ENCODE measurements at regions of chr2 and their contacts with region 1.

Region 1: DNA sequence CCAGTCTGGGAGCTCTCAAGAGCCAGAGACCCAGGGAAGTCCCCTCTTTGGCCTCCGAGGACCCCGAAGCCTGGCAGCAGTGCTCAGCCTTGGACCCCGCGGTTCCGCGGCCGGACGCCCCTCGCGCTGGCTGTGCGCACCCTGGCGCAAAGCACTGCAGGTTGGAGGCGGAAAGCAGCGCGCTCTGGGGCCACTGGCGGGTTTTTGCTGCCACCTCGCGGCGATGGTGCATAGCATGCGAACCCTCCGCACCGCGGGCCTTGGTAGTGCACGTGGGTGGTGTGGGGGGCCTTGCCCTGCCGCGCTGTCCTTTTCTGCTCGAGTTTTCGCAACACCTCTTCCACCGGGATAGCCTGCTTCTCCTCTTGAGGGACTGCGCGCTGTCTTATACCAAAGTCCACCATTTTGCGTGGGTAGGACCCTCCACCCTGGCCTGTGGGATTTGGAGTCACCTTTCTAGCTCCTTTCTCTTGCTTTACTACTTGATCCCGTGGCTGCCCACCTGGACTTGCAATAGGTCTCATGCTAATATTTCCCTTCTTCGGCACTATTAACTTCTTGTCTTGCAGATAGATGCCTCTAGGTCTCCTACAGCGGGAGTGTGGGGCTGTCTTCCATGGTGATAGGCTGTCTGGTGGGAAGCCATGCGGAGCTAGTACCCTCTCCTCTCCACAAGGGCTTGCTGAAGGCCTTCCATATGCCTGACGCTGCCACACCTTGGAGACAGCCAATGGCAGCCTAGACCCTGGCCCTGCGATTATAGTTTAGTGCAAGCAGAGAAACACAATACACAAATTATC is 14.3 kb downstream of the SIX3 start:
- DNase-seq: peak; percentile 57 to 87 (median 71)
- H3K4me3 ChIP-seq: peak overlapping the region; percentile 18 to 74 (median 49)
- H3K27ac ChIP-seq: no peak overlapping the region
- H3K27me3 ChIP-seq: peaks cover 0 to 85% (median 54%) of the 10 kb centered on the region in 45 donors
- CTCF ChIP-seq: peak in 55 of 56 donors; percentile 68 to 98 (median 92)

Region 2: DNA sequence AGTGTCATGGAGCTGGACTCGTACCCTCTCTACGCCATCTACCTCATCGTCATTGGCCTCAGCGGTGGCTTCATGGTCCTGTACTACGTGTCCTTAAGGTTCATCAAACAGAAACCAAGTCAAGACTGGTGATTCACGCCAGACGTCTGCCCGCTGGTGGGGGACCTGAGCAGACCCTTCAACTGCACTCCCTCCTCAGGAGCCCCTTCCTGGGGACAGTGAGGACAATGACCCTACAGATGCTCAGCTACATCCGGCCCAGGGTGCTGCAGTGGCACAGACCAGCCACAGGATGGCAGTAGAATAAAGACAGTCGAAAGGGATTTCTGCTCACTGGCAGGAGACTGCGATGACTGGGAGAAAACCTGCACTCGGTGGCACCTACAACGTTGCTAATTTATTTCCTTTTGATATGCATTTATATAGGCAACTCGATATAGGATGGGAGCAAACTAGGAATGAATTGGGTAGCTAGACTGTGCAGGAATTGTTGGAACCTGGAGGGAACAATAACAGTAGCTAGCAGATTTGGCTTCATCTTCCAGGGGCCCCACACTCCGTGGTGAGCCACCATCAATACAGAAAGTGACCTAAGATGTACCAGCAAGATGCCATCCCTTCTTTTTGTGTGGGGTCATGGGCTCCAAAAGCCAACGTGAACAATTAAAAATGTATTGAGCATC is 1077.9 kb before region 1 on chr2:
- intact Hi-C with region 1: loop called (anchors 10 kb)
- DNase-seq: peak in 9 of 10 donors; percentile 36 to 83 (median 72)
- H3K4me3 ChIP-seq: peak overlapping the region in 22 of 59 donors; percentile 0 to 50 (median 23)
- H3K27ac ChIP-seq: no peak overlapping the region
- H3K27me3 ChIP-seq: peaks cover 0 to 5% (median 0%) of the 10 kb centered on the region in 45 donors
- CTCF ChIP-seq: peak; percentile 76 to 99 (median 94)

Region 3: DNA sequence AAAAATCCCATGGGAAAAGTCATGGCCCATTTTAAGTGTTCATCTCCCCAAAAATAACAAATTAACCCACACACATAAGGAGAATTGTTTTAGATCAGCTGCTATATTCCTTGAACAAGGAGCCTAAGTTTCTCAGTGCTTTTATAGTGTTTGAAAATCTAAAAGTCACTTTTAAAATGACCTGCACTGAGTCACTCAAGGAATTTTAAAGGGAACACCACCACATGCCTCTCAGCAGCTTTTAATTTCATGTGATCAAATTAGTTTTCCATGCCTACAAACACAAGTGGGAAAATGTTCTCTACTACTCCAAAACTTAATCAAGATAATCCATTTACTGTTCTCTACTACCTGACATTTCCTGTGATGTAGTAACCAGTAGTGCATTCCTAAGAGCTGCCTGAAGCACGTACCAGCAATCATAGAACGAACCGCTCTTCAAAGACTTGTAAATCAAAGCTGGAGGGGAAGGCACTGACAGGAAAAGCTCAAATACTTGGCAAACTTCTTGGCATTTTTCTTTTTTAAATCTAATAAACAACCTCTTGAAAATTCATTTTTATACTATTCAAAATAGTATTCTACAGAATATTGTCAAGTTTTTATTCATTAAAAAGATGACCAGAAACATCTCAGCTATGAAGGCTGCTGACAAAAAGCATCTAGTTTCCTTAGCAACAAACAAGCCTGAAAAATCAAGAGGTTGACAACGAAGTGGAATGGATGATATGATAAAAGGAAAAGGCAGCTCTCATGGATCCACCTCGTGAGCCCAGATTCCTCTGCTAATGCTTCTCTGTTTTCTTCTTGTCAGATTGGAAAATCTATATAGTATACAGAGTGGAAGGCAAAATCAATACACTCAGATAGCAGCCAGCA is 997.2 kb before region 1 on chr2:
- intact Hi-C with region 1: loop called in 1 of 2 experiments (anchors 5 kb)
- DNase-seq: no peak
- H3K4me3 ChIP-seq: no peak overlapping the region
- H3K27ac ChIP-seq: no peak overlapping the region
- H3K27me3 ChIP-seq: no peaks in the 10 kb centered on the region
- CTCF ChIP-seq: no peak

Region 4: DNA sequence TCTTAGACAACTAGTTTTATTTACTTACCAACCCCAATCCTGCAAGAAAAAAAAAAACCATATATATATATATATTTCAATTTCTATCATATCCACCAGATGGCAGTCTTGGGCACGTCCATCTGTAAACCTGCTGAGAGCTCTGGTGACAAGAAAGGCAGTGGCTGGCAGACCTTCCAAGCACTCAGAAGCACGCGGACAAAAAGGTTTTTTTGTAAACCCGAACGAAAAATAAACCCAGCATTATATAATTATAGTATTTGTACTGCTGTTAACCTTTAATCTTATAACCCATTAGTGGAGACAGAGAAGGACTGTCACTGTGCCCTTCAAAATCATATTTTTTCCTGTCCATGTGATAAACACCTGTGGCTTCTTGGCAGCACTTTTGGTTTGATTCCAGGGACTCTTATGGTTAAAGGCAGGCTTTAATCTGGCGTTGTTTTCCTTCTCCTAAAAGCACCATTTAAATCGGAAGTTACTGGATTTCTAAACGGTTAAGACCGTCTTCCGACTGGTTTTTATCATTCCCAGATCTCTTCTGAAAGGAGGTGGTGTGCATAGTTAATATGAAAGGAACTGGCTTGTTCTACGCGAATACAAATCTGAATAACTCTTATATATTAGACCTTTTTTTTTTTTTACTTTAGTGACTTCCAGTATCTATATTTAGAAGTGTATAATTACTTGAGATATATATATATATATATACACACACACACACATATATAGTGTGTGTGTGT is 711.5 kb before region 1 on chr2:
- intact Hi-C with region 1: loop called in 1 of 2 experiments (anchors 10 kb)
- DNase-seq: peak in 7 of 10 donors; percentile 56 to 76 (median 63)
- H3K4me3 ChIP-seq: peak overlapping the region; percentile 14 to 74 (median 51)
- H3K27ac ChIP-seq: peak overlapping the region in 58 of 59 donors; percentile 27 to 94 (median 80)
- H3K27me3 ChIP-seq: no peaks in the 10 kb centered on the region
- CTCF ChIP-seq: peak; percentile 55 to 94 (median 78)

Region 5: GRCh38 chr2:44392338-44392943 is 563.4 kb before region 1 on chr2:
- intact Hi-C with region 1: loop called (anchors 5 to 10 kb)
- DNase-seq: peak in 4 of 10 donors; percentile 16 to 48 (median 37)
- H3K4me3 ChIP-seq: no peak overlapping the region
- H3K27ac ChIP-seq: no peak overlapping the region
- H3K27me3 ChIP-seq: no peaks in the 10 kb centered on the region
- CTCF ChIP-seq: peak; percentile 44 to 77 (median 64)

Region 6: GRCh38 chr2:44479122-44479887 is 476.5 kb before region 1 on chr2:
- intact Hi-C with region 1: loop called (anchors 5 kb)
- DNase-seq: peak in 2 of 10 donors; percentile 30 to 51
- H3K4me3 ChIP-seq: peak overlapping the region in 16 of 59 donors; percentile 2 to 38 (median 19)
- H3K27ac ChIP-seq: no peak overlapping the region
- H3K27me3 ChIP-seq: no peaks in the 10 kb centered on the region
- CTCF ChIP-seq: peak; percentile 91 to 100 (median 100)

Region 7: DNA sequence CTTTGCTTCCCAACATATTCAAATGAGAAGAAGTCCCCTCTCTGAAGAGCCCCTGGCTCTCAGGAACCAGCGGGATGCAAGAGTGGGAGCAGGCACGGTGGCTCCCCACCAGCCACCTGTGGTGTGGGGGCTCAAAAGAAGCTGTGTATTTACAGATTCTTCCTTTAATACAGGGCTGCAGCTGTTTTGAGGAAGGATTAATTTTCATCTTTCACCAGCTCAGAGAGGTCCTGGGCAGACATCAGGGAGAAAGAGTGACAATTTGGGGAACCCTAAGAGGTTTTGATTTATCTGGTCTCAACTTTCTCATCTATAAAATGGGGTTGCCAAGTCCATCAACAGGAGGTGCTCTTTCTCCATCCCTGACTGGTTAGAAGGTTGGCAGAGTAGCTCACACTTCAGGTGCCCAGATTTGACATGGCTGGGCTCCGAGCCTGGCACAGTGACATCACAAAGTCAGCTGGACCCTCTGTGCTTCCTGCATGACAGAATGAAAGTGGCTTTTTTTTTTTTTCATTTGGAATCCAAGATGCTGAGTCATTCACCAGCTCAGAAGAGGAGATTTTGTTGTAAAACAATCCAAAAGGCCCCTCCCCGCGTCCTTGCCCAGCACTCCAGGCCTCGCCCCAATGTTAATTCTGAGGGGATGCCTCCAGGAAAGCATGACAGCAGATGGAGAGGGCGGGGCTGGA is 69.0 kb after region 1 on chr2:
- intact Hi-C with region 1: no loop called
- DNase-seq: no peak
- H3K4me3 ChIP-seq: no peak overlapping the region
- H3K27ac ChIP-seq: no peak overlapping the region
- H3K27me3 ChIP-seq: peaks cover 0 to 7% (median 0%) of the 10 kb centered on the region in 45 donors
- CTCF ChIP-seq: no peak